IMR-90 (cell line): ENCODE measurements at regions of chr17 and their contacts with region 1.

Region 1: GRCh38 chr17:82022981-82023374 is at the start of gene LRRC45:
- DNase-seq: peak; percentile 99
- ATAC-seq: peak; percentile 95
- H3K4me3 ChIP-seq: peak within 1 kb of the TSS; percentile 92
- H3K27ac ChIP-seq: peak within 1 kb of the TSS; percentile 51; the same call in 1 of the 2 replicates
- H3K4me1 ChIP-seq: peaks cover 13% of the 10 kb centered on the region
- H3K27me3 ChIP-seq: no peaks in the 10 kb centered on the region
- CTCF ChIP-seq: no peak
- POLR2A ChIP-seq: no peak
- RAD21 ChIP-seq: no peak
- total RNA-seq, gene LRRC45: 7.2 and 7.8 TPM in 2 replicates

Region 2: DNA sequence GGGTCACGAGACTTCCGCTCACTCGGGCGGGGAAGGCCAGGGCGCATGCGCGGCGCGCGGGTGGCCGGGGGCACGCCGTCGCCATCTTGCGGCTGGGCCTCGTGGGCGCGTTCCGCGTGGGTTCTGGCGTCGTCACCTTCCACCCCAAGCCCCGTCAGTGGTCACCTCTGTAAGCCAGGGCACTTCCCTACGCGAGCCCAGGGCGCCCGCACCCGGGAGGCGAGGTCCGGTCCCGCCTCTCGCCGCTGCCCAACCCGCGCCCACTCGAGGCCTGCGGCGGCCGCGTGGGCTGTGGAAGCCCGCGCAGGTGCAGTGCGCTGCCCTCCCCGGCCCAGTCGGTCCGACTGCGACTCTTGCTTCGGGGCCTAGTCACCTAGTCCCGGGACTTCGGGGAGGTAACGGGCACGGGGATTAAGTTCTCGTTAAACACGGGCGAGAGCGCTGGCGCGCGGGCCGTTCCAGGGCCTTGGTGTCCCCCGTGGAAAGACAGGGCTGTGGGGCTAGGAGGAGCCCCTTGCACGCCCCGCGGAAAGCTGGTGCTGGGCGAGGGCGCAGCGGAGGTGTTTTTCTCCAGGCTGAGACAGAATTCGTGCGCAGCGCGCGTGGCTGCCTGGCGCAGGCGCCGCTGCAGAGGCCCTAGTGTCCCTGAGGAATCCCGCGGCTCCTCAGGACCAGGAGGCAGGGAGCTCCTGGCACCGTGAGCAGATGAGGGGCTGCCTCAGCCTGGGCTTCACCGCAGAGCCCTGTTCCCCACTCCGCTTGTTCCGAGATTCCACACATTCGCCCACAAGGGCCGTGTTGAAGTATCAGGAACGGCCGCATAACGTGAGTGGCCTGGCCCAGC is 151.4 kb before region 1 on chr17:
- CTCF ChIA-PET with region 1: no interaction called
- POLR2A ChIA-PET with region 1: no interaction called
- dilution Hi-C with region 1: no loop called
- in situ Hi-C with region 1: no loop called
- intact Hi-C with region 1: loop called (anchors 2 kb)
- DNase-seq: peak; percentile 83
- ATAC-seq: peak; percentile 4
- H3K4me3 ChIP-seq: peak overlapping the region; percentile 87
- H3K27ac ChIP-seq: peak overlapping the region; percentile 99
- H3K4me1 ChIP-seq: peaks cover 33% of the 10 kb centered on the region
- H3K27me3 ChIP-seq: no peaks in the 10 kb centered on the region
- CTCF ChIP-seq: peak; percentile 30; the same call in 1 of the 2 replicates
- POLR2A ChIP-seq: peak; percentile 4; the same call in 1 of the 2 replicates
- RAD21 ChIP-seq: no peak

Region 3: GRCh38 chr17:81917565-81918332 is 105.2 kb before region 1 on chr17 and contains the start of gene SIRT7:
- CTCF ChIA-PET with region 1: no interaction called
- POLR2A ChIA-PET with region 1: no interaction called
- dilution Hi-C with region 1: no loop called
- in situ Hi-C with region 1: no loop called
- intact Hi-C with region 1: no loop called
- DNase-seq: peak; percentile 58
- ATAC-seq: peak; percentile 84
- H3K4me3 ChIP-seq: peak within 1 kb of the TSS; percentile 98
- H3K27ac ChIP-seq: peak within 1 kb of the TSS; percentile 39; the same call in 1 of the 2 replicates
- H3K4me1 ChIP-seq: peaks cover 18% of the 10 kb centered on the region
- H3K27me3 ChIP-seq: no peaks in the 10 kb centered on the region
- CTCF ChIP-seq: no peak
- POLR2A ChIP-seq: no peak
- RAD21 ChIP-seq: no peak
- total RNA-seq, gene SIRT7: 13.9 and 14.5 TPM in 2 replicates

Region 4: DNA sequence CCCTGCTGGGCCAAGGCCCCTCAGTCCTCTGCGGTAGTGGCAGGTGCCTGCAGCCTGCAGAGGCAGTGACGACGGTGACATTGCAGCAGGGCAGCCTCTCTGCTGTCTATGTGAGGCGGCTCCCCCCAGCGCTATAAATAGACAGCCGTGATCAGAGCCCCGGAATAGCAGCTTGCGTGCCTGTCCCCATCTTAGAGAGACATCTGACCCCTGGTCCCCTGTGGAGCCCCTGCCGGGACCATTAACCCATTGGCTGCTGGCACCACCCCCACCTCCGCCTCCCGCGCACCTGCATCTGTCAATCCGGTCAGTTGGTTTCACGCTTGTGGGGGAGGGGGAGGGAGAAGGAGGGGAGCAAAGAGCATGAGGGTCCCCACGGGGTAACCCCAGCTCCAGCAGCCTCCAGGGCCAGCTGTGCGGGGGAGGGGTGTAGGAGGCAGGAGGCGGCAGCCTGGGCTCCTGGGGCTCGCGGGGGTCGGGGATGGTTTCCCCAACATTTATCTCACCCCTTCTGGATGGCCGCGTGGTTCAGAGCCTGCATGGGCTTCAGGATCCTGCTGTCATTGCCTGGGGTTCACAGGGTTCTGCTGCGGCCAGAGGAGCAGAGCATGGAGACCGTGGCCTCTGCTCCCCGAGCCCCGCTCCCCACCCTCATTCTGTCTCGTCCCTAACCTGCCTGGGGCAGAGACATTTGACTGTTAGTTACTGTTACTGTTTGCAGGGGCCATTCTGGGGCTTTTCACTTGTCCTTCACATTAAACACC is 81.0 kb before region 1 on chr17:
- CTCF ChIA-PET with region 1: no interaction called
- POLR2A ChIA-PET with region 1: no interaction called
- dilution Hi-C with region 1: no loop called
- in situ Hi-C with region 1: no loop called
- intact Hi-C with region 1: no loop called
- DNase-seq: no peak
- ATAC-seq: no peak
- H3K4me3 ChIP-seq: no peak overlapping the region
- H3K27ac ChIP-seq: no peak overlapping the region
- H3K4me1 ChIP-seq: no peaks in the 10 kb centered on the region
- H3K27me3 ChIP-seq: peaks cover 25% of the 10 kb centered on the region
- CTCF ChIP-seq: no peak
- POLR2A ChIP-seq: no peak
- RAD21 ChIP-seq: no peak

Region 5: GRCh38 chr17:81959362-81960129 is 63.4 kb before region 1 on chr17:
- CTCF ChIA-PET with region 1: interaction called, 17 read pairs
- POLR2A ChIA-PET with region 1: no interaction called
- dilution Hi-C with region 1: no loop called
- in situ Hi-C with region 1: no loop called
- intact Hi-C with region 1: loop called (anchors 1 kb)
- DNase-seq: peak; percentile 24
- ATAC-seq: peak; percentile 91
- H3K4me3 ChIP-seq: peak overlapping the region; percentile 21
- H3K27ac ChIP-seq: no peak overlapping the region
- H3K4me1 ChIP-seq: no peaks in the 10 kb centered on the region
- H3K27me3 ChIP-seq: peaks cover 50% of the 10 kb centered on the region
- CTCF ChIP-seq: peak; percentile 99
- POLR2A ChIP-seq: no peak
- RAD21 ChIP-seq: peak; percentile 90

Region 6: GRCh38 chr17:81967533-81968395 is 55.2 kb before region 1 on chr17:
- CTCF ChIA-PET with region 1: no interaction called
- POLR2A ChIA-PET with region 1: no interaction called
- dilution Hi-C with region 1: no loop called
- in situ Hi-C with region 1: loop called (anchors 5 kb)
- intact Hi-C with region 1: no loop called
- DNase-seq: peak; percentile 32
- ATAC-seq: peak; percentile 60
- H3K4me3 ChIP-seq: no peak overlapping the region
- H3K27ac ChIP-seq: no peak overlapping the region
- H3K4me1 ChIP-seq: peaks cover 9% of the 10 kb centered on the region; the same call in 1 of the 2 replicates
- H3K27me3 ChIP-seq: peaks cover 9% of the 10 kb centered on the region
- CTCF ChIP-seq: no peak
- POLR2A ChIP-seq: no peak
- RAD21 ChIP-seq: no peak

Region 7: DNA sequence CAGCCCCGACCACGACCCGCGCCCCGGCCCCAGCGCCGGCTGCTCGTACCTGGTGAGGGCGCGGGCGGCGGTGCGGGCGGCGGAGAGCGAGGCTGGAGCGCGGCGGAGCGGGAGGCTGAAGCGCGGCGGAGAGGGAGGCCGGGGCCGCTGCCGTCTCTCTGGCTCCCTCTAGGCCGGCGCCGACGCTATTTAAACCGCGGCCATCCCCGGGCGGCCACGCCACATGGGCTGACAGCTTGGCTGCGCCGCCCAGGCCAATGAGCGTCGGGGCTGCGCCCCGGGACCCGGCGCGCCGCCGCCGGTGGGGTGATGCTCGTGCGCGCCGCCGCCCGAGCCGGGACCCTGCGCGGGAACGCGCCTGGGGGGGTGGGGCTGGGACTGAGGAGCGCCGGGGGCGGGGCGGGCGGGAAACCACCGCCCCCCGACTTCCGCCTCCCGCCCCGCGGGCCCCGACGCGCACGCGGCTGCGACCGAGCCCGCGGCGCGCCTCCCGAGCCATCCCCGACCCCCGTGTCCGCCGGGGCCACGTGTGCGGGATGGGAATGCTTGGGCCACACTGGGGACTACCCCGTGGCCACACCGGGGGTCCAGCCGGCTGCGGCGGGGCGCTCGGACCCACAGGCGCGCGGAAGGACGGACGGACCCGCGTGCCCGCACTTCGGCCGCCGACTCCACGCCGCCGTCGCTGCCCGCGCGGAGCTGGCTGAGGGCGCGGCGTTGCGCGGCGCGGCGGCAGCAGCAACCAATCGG is 75.3 kb after region 1 on chr17 and contains the start of gene FASN:
- CTCF ChIA-PET with region 1: no interaction called
- POLR2A ChIA-PET with region 1: interaction called, 11 read pairs
- dilution Hi-C with region 1: no loop called
- in situ Hi-C with region 1: no loop called
- intact Hi-C with region 1: no loop called
- DNase-seq: peak; percentile 93
- ATAC-seq: peak; percentile 85
- H3K4me3 ChIP-seq: peak within 1 kb of the TSS; percentile 72
- H3K27ac ChIP-seq: peak within 1 kb of the TSS; percentile 94
- H3K4me1 ChIP-seq: peaks cover 13% of the 10 kb centered on the region
- H3K27me3 ChIP-seq: no peaks in the 10 kb centered on the region
- CTCF ChIP-seq: peak; percentile 66
- POLR2A ChIP-seq: peak; percentile 97
- RAD21 ChIP-seq: peak; percentile 15; the same call in 1 of the 2 replicates
- total RNA-seq, gene FASN: 12.4 and 15.3 TPM in 2 replicates

Region 8: GRCh38 chr17:82108496-82108945 is 85.5 kb after region 1 on chr17:
- CTCF ChIA-PET with region 1: no interaction called
- POLR2A ChIA-PET with region 1: no interaction called
- dilution Hi-C with region 1: no loop called
- in situ Hi-C with region 1: no loop called
- intact Hi-C with region 1: no loop called
- DNase-seq: peak; percentile 5
- ATAC-seq: no peak
- H3K4me3 ChIP-seq: no peak overlapping the region
- H3K27ac ChIP-seq: no peak overlapping the region
- H3K4me1 ChIP-seq: peaks cover 12% of the 10 kb centered on the region
- H3K27me3 ChIP-seq: no peaks in the 10 kb centered on the region
- CTCF ChIP-seq: no peak
- POLR2A ChIP-seq: no peak
- RAD21 ChIP-seq: no peak

Region 9: GRCh38 chr17:82351716-82352488 is 328.9 kb after region 1 on chr17:
- CTCF ChIA-PET with region 1: no interaction called
- POLR2A ChIA-PET with region 1: no interaction called
- dilution Hi-C with region 1: no loop called
- in situ Hi-C with region 1: no loop called
- intact Hi-C with region 1: no loop called
- DNase-seq: peak; percentile 84
- ATAC-seq: peak; percentile 93
- H3K4me3 ChIP-seq: no peak overlapping the region
- H3K27ac ChIP-seq: no peak overlapping the region
- H3K4me1 ChIP-seq: peaks cover 5% of the 10 kb centered on the region; the same call in 1 of the 2 replicates
- H3K27me3 ChIP-seq: peaks cover 29% of the 10 kb centered on the region
- CTCF ChIP-seq: peak; percentile 93
- POLR2A ChIP-seq: 0 out of 2 replicates have a peak, but pooled peaks have one; percentile 26
- RAD21 ChIP-seq: peak; percentile 94